T-cell (primary cell): ENCODE measurements at regions of chr15 and their contacts with region 1.

Region 1: GRCh38 chr15:66946578-66947164 is 118.7 kb upstream of the SMAD3 start:
- DNase-seq: peak; percentile 43 to 87 (median 66)
- ATAC-seq: peak; percentile 62 to 80 (median 73)
- H3K4me3 ChIP-seq: no peak overlapping the region
- H3K4me3 Mint-ChIP-seq: no peak overlapping the region
- H3K27ac ChIP-seq: no peak overlapping the region
- H3K27ac Mint-ChIP-seq: no peak overlapping the region
- H3K4me1 ChIP-seq: no peaks in the 10 kb centered on the region
- H3K4me1 Mint-ChIP-seq: peaks cover 0 to 3% (median 3%) of the 10 kb centered on the region in 3 donors
- H3K27me3 ChIP-seq: peaks cover 0 to 8% of the 10 kb centered on the region in 2 experiments
- H3K27me3 Mint-ChIP-seq: no peaks in the 10 kb centered on the region

Region 2: GRCh38 chr15:67303490-67304363 is 357.1 kb after region 1 on chr15:
- CTCF ChIA-PET with region 1: interaction called, 7 to 30 read pairs
- POLR2A ChIA-PET with region 1: no interaction called
- DNase-seq: peak in 21 of 35 experiments; percentile 1 to 73 (median 9)
- ATAC-seq: peak in 3 of 4 experiments; percentile 50 to 62 (median 57)
- H3K4me3 ChIP-seq: no peak overlapping the region
- H3K4me3 Mint-ChIP-seq: no peak overlapping the region
- H3K27ac ChIP-seq: no peak overlapping the region
- H3K27ac Mint-ChIP-seq: no peak overlapping the region
- H3K4me1 ChIP-seq: no peaks in the 10 kb centered on the region
- H3K4me1 Mint-ChIP-seq: no peaks in the 10 kb centered on the region
- H3K27me3 ChIP-seq: no peaks in the 10 kb centered on the region
- H3K27me3 Mint-ChIP-seq: no peaks in the 10 kb centered on the region